Activated CD4-positive, alpha-beta T cell treated with anti-CD3 and anti-CD28 coated beads, Interleukin-2, amount 10 ng/mL, durations not matched to agents 24 days and 14 days (primary cell): ENCODE measurements at regions of chr6 and their contacts with region 1.

Region 1: GRCh38 chr6:121263742-121264141 is 70.5 kb downstream of the TBC1D32 start:
- DNase-seq: no peak
- H3K4me3 Mint-ChIP-seq: no peak overlapping the region
- H3K27ac Mint-ChIP-seq: no peak overlapping the region
- H3K4me1 Mint-ChIP-seq: no peaks in the 10 kb centered on the region
- H3K27me3 Mint-ChIP-seq: no peaks in the 10 kb centered on the region

Region 2: GRCh38 chr6:121236984-121237383 is 26.8 kb before region 1 on chr6:
- intact Hi-C with region 1: loop called (anchors 2 kb)
- DNase-seq: no peak
- H3K4me3 Mint-ChIP-seq: no peak overlapping the region
- H3K27ac Mint-ChIP-seq: no peak overlapping the region
- H3K4me1 Mint-ChIP-seq: peaks cover 2% of the 10 kb centered on the region
- H3K27me3 Mint-ChIP-seq: no peaks in the 10 kb centered on the region